ENCODE measurements at regions of chr3 and their contacts with region 1.

Region 1: GRCh38 chr3:122679085-122679881 is 1.4 kb upstream of the PARP14 start:
- DNase-seq: peak; percentile 65 to 92 (median 83)
- ATAC-seq: peak; percentile 66
- H3K4me3 ChIP-seq: peak overlapping the region; percentile 88 to 98
- H3K4me3 Mint-ChIP-seq: peak overlapping the region; percentile 93
- H3K27ac ChIP-seq: peak overlapping the region; percentile 95 to 97
- H3K27ac Mint-ChIP-seq: peak overlapping the region; percentile 99
- H3K4me1 ChIP-seq: peaks cover 31% of the 10 kb centered on the region
- H3K4me1 Mint-ChIP-seq: peaks cover 51% of the 10 kb centered on the region
- H3K27me3 ChIP-seq: no peaks in the 10 kb centered on the region
- H3K27me3 Mint-ChIP-seq: no peaks in the 10 kb centered on the region
- CTCF ChIP-seq: peak; percentile 80

Region 2: GRCh38 chr3:121529308-121529707 is 1150.0 kb before region 1 on chr3:
- CTCF ChIA-PET with region 1: no interaction called
- POLR2A ChIA-PET with region 1: no interaction called
- intact Hi-C with region 1: no loop called
- DNase-seq: no peak
- ATAC-seq: no peak
- H3K4me3 ChIP-seq: no peak overlapping the region
- H3K4me3 Mint-ChIP-seq: no peak overlapping the region
- H3K27ac ChIP-seq: no peak overlapping the region
- H3K27ac Mint-ChIP-seq: no peak overlapping the region
- H3K4me1 ChIP-seq: no peaks in the 10 kb centered on the region
- H3K4me1 Mint-ChIP-seq: no peaks in the 10 kb centered on the region
- H3K27me3 ChIP-seq: no peaks in the 10 kb centered on the region
- H3K27me3 Mint-ChIP-seq: no peaks in the 10 kb centered on the region
- CTCF ChIP-seq: no peak

Region 3: GRCh38 chr3:121566773-121567172 is 1112.5 kb before region 1 on chr3:
- CTCF ChIA-PET with region 1: no interaction called
- POLR2A ChIA-PET with region 1: no interaction called
- intact Hi-C with region 1: no loop called
- DNase-seq: no peak
- ATAC-seq: no peak
- H3K4me3 ChIP-seq: no peak overlapping the region
- H3K4me3 Mint-ChIP-seq: no peak overlapping the region
- H3K27ac ChIP-seq: no peak overlapping the region
- H3K27ac Mint-ChIP-seq: no peak overlapping the region
- H3K4me1 ChIP-seq: no peaks in the 10 kb centered on the region
- H3K4me1 Mint-ChIP-seq: no peaks in the 10 kb centered on the region
- H3K27me3 ChIP-seq: no peaks in the 10 kb centered on the region
- H3K27me3 Mint-ChIP-seq: peaks cover 5% of the 10 kb centered on the region
- CTCF ChIP-seq: no peak

Region 4: DNA sequence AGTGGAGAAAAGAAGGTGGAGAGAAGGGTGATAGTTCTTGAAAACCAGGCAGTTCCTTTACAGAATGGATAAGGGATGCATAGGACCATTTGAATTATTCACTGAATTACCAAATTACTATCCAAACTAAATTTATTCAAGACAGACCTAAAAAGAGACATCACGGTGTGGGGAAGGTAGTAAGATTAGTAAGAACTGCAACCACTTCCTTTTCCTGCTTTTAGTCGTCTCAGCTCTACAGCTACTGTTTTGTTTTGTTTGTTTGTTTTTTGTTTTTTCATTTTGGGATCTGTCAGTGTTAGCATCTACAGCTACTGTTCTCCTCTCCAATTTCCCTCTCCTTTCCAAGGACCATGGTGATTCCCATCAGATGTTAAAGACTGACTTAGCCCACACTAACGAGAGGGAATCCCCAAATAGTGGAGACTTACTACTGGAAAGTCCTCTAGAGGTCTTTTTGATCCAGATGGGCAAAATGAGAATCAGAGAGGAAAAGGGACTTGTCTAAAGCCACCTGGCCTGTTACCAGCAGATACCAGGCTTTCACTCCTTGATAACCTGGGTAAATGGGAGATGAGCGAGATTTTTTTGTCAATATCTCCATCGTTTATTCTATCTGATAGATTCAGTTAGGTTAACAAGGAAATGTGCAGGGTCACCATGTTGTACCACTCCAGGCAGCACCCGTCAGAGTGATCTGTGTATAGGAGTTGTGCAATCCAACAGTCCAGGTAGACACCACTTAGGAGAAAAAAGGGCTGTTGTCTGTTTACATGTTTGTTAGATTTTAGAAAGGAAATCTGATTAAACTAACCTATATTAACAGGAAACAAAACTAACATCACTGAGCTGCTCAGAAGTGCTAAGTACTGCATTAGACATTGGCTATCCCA is 1024.5 kb before region 1 on chr3:
- CTCF ChIA-PET with region 1: no interaction called
- POLR2A ChIA-PET with region 1: no interaction called
- intact Hi-C with region 1: loop called in 1 of 2 experiments (anchors 10 kb)
- DNase-seq: peak in 2 of 9 experiments; percentile 20 to 51
- ATAC-seq: peak; percentile 81
- H3K4me3 ChIP-seq: peak overlapping the region in 1 of 2 experiments; percentile 7
- H3K4me3 Mint-ChIP-seq: peak overlapping the region; percentile 61
- H3K27ac ChIP-seq: peak overlapping the region; percentile 8 to 70
- H3K27ac Mint-ChIP-seq: peak overlapping the region; percentile 91
- H3K4me1 ChIP-seq: peaks cover 76% of the 10 kb centered on the region
- H3K4me1 Mint-ChIP-seq: peaks cover 86% of the 10 kb centered on the region
- H3K27me3 ChIP-seq: no peaks in the 10 kb centered on the region
- H3K27me3 Mint-ChIP-seq: no peaks in the 10 kb centered on the region
- CTCF ChIP-seq: no peak

Region 5: DNA sequence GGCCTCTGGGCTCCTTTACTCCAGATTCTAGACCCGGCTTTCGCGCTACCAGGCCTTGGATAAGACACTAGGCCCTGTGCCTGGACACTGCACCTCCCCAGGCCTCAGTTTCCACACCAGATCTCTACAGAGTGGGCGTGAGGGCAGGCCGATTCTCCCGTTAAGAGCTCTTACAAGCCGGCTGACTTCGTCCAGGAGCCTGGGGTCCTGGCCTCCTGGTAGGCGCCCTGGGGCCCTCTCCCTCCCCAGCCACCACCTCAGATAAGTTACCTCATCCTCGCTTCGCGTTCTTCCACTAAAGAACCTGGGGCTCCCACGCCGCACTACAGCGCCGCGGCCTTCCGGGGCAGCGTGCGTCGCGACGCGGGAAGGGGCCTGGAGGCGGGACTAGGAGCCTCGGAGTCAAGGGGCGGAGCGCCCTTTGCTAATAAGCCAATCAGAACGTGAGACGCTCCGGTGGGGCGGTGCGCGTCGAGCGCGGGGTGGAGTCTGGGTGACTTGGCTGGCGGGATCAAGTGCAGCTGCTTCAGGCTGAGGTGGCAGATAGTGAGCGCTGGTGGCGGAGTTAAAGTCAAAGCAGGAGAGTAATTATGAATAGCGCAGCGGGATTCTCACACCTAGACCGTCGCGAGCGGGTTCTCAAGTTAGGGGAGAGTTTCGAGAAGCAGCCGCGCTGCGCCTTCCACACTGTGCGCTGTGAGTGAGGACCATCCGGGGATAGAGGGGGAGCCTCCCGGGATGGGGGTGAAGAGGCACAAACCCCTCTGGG is 844.4 kb before region 1 on chr3 and contains the starts of genes EAF2 and IQCB1:
- CTCF ChIA-PET with region 1: no interaction called
- POLR2A ChIA-PET with region 1: no interaction called
- intact Hi-C with region 1: loop called (anchors 2 to 5 kb)
- DNase-seq: peak; percentile 91 to 98 (median 95)
- ATAC-seq: peak; percentile 97
- H3K4me3 ChIP-seq: peak within 1 kb of the TSS; percentile 74 to 91
- H3K4me3 Mint-ChIP-seq: peak within 1 kb of the TSS; percentile 93
- H3K27ac ChIP-seq: peak within 1 kb of the TSS; percentile 82 to 87
- H3K27ac Mint-ChIP-seq: peak within 1 kb of the TSS; percentile 94
- H3K4me1 ChIP-seq: peaks cover 25% of the 10 kb centered on the region
- H3K4me1 Mint-ChIP-seq: peaks cover 53% of the 10 kb centered on the region
- H3K27me3 ChIP-seq: no peaks in the 10 kb centered on the region
- H3K27me3 Mint-ChIP-seq: no peaks in the 10 kb centered on the region
- CTCF ChIP-seq: no peak
- total RNA-seq, gene EAF2: 3.5 to 3.7 TPM
- total RNA-seq, gene IQCB1: 36.5 to 42.2 TPM

Region 6: DNA sequence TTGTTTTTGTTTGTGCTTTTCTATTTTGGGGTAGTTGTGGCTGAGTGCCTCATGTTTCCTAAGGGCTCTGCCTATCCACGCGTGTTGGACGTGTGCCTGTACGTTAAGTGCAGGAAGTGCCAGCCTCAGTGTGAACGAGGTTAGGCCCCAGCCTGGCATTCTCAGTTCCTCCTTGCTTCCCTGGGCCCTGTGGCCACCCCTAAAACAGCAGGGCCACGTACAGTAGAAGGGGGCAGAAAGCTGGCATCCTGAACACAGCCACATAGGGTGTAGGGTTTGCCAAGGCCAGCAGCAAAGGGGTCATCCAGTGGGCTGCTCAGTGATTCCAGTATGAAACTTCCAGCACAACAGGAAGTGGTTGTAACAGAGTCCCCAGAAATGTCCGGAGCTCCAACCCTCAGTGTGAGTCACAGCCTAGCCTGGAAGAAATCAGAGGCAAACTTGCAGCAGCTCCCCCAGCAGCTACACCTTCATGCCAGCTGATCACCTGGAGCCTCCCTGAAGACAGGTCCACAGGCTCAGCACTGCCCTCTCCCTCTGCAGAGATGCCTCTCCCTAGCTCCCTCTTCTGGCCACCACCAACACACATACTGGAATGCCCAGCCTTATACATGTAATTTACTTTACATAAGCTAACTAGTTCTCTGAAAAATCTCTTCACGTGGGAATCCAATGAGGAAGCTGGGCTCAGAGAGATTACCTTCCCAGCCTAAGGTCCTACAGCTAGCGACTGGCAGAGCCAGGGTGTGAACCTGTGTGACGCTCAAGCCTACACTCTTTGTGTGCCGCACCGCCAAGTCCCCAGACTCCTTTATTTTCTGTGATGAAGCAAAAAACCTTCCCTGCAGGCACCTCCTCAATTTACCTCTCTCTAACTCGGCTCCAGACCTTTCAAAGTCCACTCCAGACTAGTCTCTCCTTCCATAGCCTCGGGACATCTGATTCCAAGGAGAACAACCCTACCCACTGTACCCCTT is 683.8 kb before region 1 on chr3:
- CTCF ChIA-PET with region 1: no interaction called
- POLR2A ChIA-PET with region 1: no interaction called
- intact Hi-C with region 1: no loop called
- DNase-seq: peak in 4 of 9 experiments; percentile 9 to 53 (median 39)
- ATAC-seq: peak; percentile 52
- H3K4me3 ChIP-seq: no peak overlapping the region
- H3K4me3 Mint-ChIP-seq: no peak overlapping the region
- H3K27ac ChIP-seq: no peak overlapping the region
- H3K27ac Mint-ChIP-seq: no peak overlapping the region
- H3K4me1 ChIP-seq: no peaks in the 10 kb centered on the region
- H3K4me1 Mint-ChIP-seq: peaks cover 10% of the 10 kb centered on the region
- H3K27me3 ChIP-seq: no peaks in the 10 kb centered on the region
- H3K27me3 Mint-ChIP-seq: peaks cover 3% of the 10 kb centered on the region
- CTCF ChIP-seq: no peak

Region 7: GRCh38 chr3:122392868-122393844 is 286.1 kb before region 1 on chr3:
- CTCF ChIA-PET with region 1: interaction called, 29 read pairs
- POLR2A ChIA-PET with region 1: interaction called, 5 read pairs
- intact Hi-C with region 1: loop called (anchors 1 to 2 kb)
- DNase-seq: peak in 3 of 9 experiments; percentile 21 to 68 (median 51)
- ATAC-seq: peak; percentile 68
- H3K4me3 ChIP-seq: no peak overlapping the region
- H3K4me3 Mint-ChIP-seq: no peak overlapping the region
- H3K27ac ChIP-seq: no peak overlapping the region
- H3K27ac Mint-ChIP-seq: no peak overlapping the region
- H3K4me1 ChIP-seq: no peaks in the 10 kb centered on the region
- H3K4me1 Mint-ChIP-seq: peaks cover 8% of the 10 kb centered on the region
- H3K27me3 ChIP-seq: no peaks in the 10 kb centered on the region
- H3K27me3 Mint-ChIP-seq: no peaks in the 10 kb centered on the region
- CTCF ChIP-seq: peak; percentile 93

Region 8: DNA sequence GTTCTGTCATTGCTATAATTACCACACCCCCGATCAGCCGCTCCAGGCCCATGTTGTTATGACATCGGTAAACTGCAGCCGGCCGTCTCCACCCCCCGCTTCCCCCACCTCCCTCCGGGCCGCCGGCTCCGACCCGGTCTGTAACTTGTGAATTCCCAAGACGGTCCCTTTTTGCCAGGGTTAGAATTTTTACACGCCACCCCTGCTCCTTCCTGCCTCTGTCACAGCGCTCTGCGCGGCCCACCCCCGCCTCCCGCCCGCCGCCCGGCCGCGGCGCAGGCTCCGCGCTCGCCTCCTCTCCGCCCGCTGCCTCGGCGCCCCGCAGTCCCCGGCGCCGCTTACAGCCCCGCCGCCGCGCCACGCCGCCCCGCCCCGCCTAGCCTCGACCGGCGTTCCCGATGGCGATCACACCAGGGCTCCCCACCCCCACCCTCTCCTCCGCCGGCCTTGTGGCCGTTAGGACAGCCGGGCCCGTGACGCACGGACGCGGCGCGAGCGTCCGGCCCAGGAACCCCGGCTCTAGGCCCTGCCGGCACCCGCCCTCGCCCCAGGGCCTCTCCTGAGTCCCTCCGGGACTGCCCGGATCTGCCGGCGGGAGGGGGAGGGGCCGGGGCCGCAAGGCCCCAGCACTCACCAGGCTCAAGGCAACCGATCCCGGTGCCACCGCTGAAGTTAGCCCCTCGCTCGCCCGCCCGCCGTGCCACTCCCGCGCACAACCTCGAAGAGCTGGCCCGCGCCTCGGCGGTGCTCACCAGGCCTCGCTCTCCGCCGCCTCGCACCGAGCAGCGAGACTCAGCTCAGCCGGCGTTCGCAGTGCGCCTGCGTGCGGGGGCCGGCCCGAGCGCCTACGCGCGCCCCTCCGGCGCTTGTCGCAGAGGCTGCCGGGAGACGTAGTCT is 164.9 kb before region 1 on chr3 and contains the start of gene KPNA1:
- CTCF ChIA-PET with region 1: interaction called, 6 read pairs
- POLR2A ChIA-PET with region 1: interaction called, 4 read pairs
- intact Hi-C with region 1: loop called in 1 of 2 experiments (anchors 1 kb)
- DNase-seq: peak; percentile 74 to 95 (median 85)
- ATAC-seq: peak; percentile 86
- H3K4me3 ChIP-seq: peak within 1 kb of the TSS; percentile 67 to 74
- H3K4me3 Mint-ChIP-seq: peak within 1 kb of the TSS; percentile 74
- H3K27ac ChIP-seq: peak within 1 kb of the TSS; percentile 88 to 89
- H3K27ac Mint-ChIP-seq: peak within 1 kb of the TSS; percentile 89
- H3K4me1 ChIP-seq: peaks cover 18% of the 10 kb centered on the region
- H3K4me1 Mint-ChIP-seq: peaks cover 42% of the 10 kb centered on the region
- H3K27me3 ChIP-seq: no peaks in the 10 kb centered on the region
- H3K27me3 Mint-ChIP-seq: no peaks in the 10 kb centered on the region
- CTCF ChIP-seq: no peak
- total RNA-seq, gene KPNA1: 39.3 to 45.0 TPM

Region 9: DNA sequence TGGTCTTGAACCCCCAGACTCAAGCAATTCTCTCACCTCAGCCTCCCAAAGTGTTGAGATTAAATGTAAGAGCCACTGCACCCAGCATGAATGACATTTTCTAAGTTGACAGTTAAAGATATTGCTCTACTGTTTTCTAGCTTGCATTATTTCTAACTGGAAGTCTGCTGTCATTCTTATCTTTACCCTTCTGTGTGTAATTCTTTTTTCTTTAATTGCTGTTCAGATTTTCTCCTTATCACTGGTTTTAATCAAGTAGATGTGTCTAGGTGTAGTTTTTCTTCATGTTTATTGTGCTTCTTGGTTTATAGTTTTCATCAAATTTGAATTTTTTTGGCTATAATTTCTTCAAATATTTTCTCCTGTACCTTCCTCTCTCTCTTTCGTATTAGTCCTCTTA is 96.9 kb before region 1 on chr3:
- CTCF ChIA-PET with region 1: interaction called, 14 read pairs
- POLR2A ChIA-PET with region 1: interaction called, 8 read pairs
- intact Hi-C with region 1: loop called in 1 of 2 experiments (anchors 5 kb)
- DNase-seq: no peak
- ATAC-seq: no peak
- H3K4me3 ChIP-seq: no peak overlapping the region
- H3K4me3 Mint-ChIP-seq: no peak overlapping the region
- H3K27ac ChIP-seq: no peak overlapping the region
- H3K27ac Mint-ChIP-seq: no peak overlapping the region
- H3K4me1 ChIP-seq: peaks cover 10% of the 10 kb centered on the region
- H3K4me1 Mint-ChIP-seq: peaks cover 42% of the 10 kb centered on the region
- H3K27me3 ChIP-seq: no peaks in the 10 kb centered on the region
- H3K27me3 Mint-ChIP-seq: no peaks in the 10 kb centered on the region
- CTCF ChIP-seq: no peak

Region 10: DNA sequence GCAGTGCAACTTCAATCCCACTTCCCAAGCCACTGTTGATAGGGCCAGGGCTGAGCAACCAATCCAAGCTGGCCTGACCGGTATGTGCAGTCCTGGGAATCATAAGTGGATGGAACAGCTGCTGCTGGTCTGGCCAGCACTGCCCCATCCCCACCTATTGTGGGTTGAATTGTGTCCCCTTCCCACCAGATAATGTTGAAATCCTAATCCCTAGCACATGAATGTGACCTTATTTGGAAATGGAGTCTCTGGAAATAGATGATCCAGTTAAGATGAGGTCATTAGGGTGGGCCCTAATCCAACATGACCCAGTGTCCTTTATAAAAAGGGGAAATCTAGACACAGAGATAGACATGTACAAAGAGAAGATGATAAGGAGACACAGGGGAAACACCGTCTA is 373.8 kb after region 1 on chr3:
- CTCF ChIA-PET with region 1: no interaction called
- POLR2A ChIA-PET with region 1: no interaction called
- intact Hi-C with region 1: no loop called
- DNase-seq: no peak
- ATAC-seq: no peak
- H3K4me3 ChIP-seq: no peak overlapping the region
- H3K4me3 Mint-ChIP-seq: no peak overlapping the region
- H3K27ac ChIP-seq: no peak overlapping the region
- H3K27ac Mint-ChIP-seq: no peak overlapping the region
- H3K4me1 ChIP-seq: no peaks in the 10 kb centered on the region
- H3K4me1 Mint-ChIP-seq: no peaks in the 10 kb centered on the region
- H3K27me3 ChIP-seq: no peaks in the 10 kb centered on the region
- H3K27me3 Mint-ChIP-seq: no peaks in the 10 kb centered on the region
- CTCF ChIP-seq: no peak

Region 11: DNA sequence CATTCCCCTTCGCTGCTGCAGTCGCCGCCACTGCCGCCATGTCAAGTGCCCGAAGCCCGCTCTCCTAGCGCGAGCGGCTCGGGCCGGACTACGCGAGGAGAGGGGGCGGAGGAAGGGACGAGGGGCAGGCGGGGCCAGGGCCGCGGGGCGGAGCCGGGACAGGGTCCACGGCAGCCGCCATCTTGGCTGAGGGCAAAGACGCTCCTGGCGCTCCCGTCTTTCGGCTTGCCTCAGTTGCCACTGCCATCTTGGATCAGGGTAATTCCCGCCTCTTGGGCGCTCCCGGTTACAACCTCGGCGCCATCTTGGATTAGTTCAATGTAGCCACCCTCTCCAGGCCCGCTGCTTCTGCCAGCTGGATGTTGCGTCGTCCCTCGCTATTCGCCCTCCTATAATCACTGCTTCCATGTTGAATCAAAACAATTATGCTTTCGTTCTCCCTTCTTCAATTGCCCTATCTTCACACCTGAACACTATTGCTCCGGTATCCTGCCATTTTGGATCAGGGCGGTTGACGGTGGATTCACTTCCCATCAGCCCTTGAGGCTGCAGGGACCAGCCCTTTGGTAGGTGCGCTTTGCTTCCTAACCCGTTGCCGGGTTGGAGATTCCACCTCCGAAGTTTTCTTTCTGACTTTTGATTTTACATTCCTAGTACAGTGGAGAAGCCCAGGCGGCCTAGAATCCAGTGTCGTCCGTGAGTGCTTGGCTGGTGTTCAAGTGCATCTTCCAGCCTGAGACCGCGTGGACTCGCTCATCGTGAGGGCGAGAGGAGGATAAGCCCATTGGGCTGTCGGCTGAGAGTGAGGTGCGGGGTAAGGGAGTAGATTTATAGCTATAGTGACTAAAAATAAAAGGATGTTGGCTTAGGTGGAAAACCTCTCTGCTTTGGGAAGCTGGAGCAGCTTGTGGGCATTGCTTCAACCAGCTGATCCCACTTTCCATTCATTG is 906.0 kb after region 1 on chr3 and contains the start of gene HACD2:
- CTCF ChIA-PET with region 1: no interaction called
- POLR2A ChIA-PET with region 1: no interaction called
- intact Hi-C with region 1: loop called in 1 of 2 experiments (anchors 5 kb)
- DNase-seq: peak; percentile 88 to 97 (median 95)
- ATAC-seq: peak; percentile 91
- H3K4me3 ChIP-seq: peak within 1 kb of the TSS; percentile 74 to 87
- H3K4me3 Mint-ChIP-seq: no peak within 1 kb of the TSS
- H3K27ac ChIP-seq: peak within 1 kb of the TSS; percentile 62 to 92
- H3K27ac Mint-ChIP-seq: peak within 1 kb of the TSS; percentile 90
- H3K4me1 ChIP-seq: peaks cover 20% of the 10 kb centered on the region
- H3K4me1 Mint-ChIP-seq: peaks cover 20% of the 10 kb centered on the region
- H3K27me3 ChIP-seq: no peaks in the 10 kb centered on the region
- H3K27me3 Mint-ChIP-seq: no peaks in the 10 kb centered on the region
- CTCF ChIP-seq: no peak
- total RNA-seq, gene HACD2: 12.9 to 13.4 TPM

Measured in CD8-positive, alpha-beta T cell (primary cell).